Activated CD8-positive, alpha-beta T cell treated with anti-CD3 and anti-CD28 coated beads, Interleukin-2, amount 10 ng/mL, durations not matched to agents 7 days and 5 days (primary cell): ENCODE measurements at regions of chr1 and their contacts with region 1.

Region 1: GRCh38 chr1:67685067-67685557 is at the start of gene GADD45A:
- DNase-seq: peak; percentile 98
- ATAC-seq: peak; percentile 95
- H3K4me3 Mint-ChIP-seq: peak within 1 kb of the TSS; percentile 95
- H3K27ac Mint-ChIP-seq: peak within 1 kb of the TSS; percentile 90
- H3K4me1 Mint-ChIP-seq: peaks cover 38% of the 10 kb centered on the region
- H3K27me3 Mint-ChIP-seq: peaks cover 4% of the 10 kb centered on the region
- total RNA-seq, gene GADD45A: 17.9 to 21.7 TPM

Region 2: DNA sequence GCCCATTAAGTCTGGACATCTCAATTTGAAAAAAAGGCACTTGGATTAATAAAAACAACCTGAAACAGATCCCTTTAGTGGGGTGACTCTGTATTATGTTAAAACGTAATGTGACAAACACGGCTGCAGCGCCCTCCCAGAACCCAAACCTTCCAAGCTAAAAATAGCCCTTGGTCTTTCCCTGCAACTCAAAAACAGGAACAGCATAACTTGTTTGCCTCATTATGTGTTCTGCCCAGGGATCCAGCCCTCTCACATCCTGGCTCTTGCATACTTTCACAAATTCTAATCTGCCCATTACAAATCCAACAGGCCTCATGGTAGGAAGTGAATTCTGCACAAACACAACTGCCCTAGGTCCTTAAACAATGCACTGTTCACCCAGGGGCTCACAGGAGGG is 94.8 kb before region 1 on chr1:
- CTCF ChIA-PET with region 1: no interaction called
- POLR2A ChIA-PET with region 1: no interaction called
- DNase-seq: no peak
- ATAC-seq: no peak
- H3K4me3 Mint-ChIP-seq: no peak overlapping the region
- H3K27ac Mint-ChIP-seq: no peak overlapping the region
- H3K4me1 Mint-ChIP-seq: no peaks in the 10 kb centered on the region
- H3K27me3 Mint-ChIP-seq: no peaks in the 10 kb centered on the region

Region 3: GRCh38 chr1:67674260-67675011 is 10.7 kb before region 1 on chr1:
- CTCF ChIA-PET with region 1: interaction called, 14 read pairs
- POLR2A ChIA-PET with region 1: interaction called, 54 read pairs
- DNase-seq: peak; percentile 73
- ATAC-seq: peak; percentile 85
- H3K4me3 Mint-ChIP-seq: peak overlapping the region; percentile 36
- H3K27ac Mint-ChIP-seq: peak overlapping the region; percentile 75
- H3K4me1 Mint-ChIP-seq: peaks cover 24% of the 10 kb centered on the region
- H3K27me3 Mint-ChIP-seq: peaks cover 12% of the 10 kb centered on the region

Region 4: GRCh38 chr1:67735806-67736627 is 50.9 kb after region 1 on chr1:
- CTCF ChIA-PET with region 1: interaction called, 4 read pairs
- POLR2A ChIA-PET with region 1: interaction called, 23 read pairs
- DNase-seq: peak; percentile 62
- ATAC-seq: peak; percentile 93
- H3K4me3 Mint-ChIP-seq: peak overlapping the region; percentile 62
- H3K27ac Mint-ChIP-seq: peak overlapping the region; percentile 86
- H3K4me1 Mint-ChIP-seq: peaks cover 19% of the 10 kb centered on the region
- H3K27me3 Mint-ChIP-seq: no peaks in the 10 kb centered on the region